ENCODE measurements at regions of chr1 and their contacts with region 1.

Region 1: GRCh38 chr1:119347858-119348257 is 20.7 kb upstream of the HAO2 start:
- DNase-seq: no peak
- ATAC-seq: peak; percentile 81
- H3K4me3 Mint-ChIP-seq: no peak overlapping the region
- H3K27ac Mint-ChIP-seq: peak overlapping the region; percentile 88
- H3K4me1 Mint-ChIP-seq: peaks cover 34% of the 10 kb centered on the region
- H3K27me3 Mint-ChIP-seq: no peaks in the 10 kb centered on the region; the same call in 1 of the 2 replicates
- CTCF ChIP-seq: no peak

Region 2: DNA sequence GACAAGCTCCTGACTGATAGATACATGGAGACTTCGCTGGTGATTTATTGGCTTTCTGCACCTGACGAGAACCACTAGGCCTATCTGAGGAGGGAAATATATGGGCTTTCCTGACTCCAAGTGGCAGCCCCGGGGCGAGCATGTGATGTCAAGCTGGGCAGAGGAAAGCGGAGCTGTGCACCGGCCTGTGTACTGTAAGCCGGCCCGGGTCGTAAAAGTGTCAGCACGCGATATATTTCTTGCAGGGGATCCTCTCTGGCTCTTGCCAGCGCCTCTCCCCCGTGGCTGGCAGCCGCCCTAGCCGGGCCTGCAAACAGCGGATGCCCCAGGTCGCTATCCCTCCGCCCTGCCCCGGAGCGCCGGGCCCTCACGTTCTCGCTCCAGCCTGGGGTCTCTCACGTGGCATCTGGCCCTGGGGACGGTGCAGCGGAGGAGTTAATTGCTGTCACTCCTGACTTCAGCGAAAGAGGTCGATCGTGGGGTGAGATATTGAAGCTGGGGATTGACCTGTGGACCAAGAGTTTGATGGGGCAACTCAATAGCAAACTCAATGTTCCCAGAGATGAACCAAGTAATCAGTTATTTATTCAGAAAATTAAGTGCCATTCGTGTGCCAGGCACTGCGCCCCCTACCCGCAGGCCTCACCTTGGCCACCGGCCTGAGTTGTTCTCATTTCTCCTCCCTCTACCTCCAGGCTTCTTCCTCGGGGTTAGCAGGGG is 20.3 kb before region 1 on chr1:
- CTCF ChIA-PET with region 1: interaction called, 10 read pairs
- POLR2A ChIA-PET with region 1: interaction called, 3 read pairs
- DNase-seq: peak; percentile 62
- ATAC-seq: peak; percentile 28
- H3K4me3 Mint-ChIP-seq: peak overlapping the region; percentile 77
- H3K27ac Mint-ChIP-seq: peak overlapping the region; percentile 95
- H3K4me1 Mint-ChIP-seq: peaks cover 84% of the 10 kb centered on the region
- H3K27me3 Mint-ChIP-seq: no peaks in the 10 kb centered on the region
- CTCF ChIP-seq: 0 out of 2 replicates have a peak, but pooled peaks have one; percentile 24